ENCODE measurements at regions of chr2 and their contacts with region 1.

Region 1: GRCh38 chr2:121771976-121772742 is 16.7 kb downstream of the TSN start:
- DNase-seq: peak; percentile 81
- H3K4me3 ChIP-seq: peak overlapping the region; percentile 43
- H3K27ac ChIP-seq: peak overlapping the region; percentile 87
- H3K4me1 ChIP-seq: peaks cover 27% of the 10 kb centered on the region
- CTCF ChIP-seq: no peak

Region 2: DNA sequence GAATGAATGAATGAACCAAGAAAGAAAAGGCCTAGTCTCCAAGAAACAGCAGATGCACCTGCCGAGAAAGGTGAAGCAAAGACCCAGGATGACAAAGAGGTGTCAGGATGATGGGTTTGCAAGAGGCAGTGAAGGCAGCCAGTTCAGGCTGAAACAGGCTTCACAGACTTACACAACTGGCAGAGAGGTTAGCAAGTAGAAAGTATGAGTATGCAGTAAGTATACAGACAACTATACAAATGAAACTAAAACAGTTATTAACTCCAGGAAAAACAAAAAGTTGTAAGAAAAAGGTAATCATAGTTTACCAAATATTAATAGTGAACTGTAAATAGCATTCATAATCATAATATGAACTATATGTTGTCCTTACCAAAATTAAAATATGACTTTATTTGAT is 261.3 kb before region 1 on chr2:
- CTCF ChIA-PET with region 1: no interaction called
- POLR2A ChIA-PET with region 1: no interaction called
- intact Hi-C with region 1: no loop called
- DNase-seq: no peak
- H3K4me3 ChIP-seq: no peak overlapping the region
- H3K27ac ChIP-seq: no peak overlapping the region
- H3K4me1 ChIP-seq: no peaks in the 10 kb centered on the region
- CTCF ChIP-seq: no peak

Region 3: DNA sequence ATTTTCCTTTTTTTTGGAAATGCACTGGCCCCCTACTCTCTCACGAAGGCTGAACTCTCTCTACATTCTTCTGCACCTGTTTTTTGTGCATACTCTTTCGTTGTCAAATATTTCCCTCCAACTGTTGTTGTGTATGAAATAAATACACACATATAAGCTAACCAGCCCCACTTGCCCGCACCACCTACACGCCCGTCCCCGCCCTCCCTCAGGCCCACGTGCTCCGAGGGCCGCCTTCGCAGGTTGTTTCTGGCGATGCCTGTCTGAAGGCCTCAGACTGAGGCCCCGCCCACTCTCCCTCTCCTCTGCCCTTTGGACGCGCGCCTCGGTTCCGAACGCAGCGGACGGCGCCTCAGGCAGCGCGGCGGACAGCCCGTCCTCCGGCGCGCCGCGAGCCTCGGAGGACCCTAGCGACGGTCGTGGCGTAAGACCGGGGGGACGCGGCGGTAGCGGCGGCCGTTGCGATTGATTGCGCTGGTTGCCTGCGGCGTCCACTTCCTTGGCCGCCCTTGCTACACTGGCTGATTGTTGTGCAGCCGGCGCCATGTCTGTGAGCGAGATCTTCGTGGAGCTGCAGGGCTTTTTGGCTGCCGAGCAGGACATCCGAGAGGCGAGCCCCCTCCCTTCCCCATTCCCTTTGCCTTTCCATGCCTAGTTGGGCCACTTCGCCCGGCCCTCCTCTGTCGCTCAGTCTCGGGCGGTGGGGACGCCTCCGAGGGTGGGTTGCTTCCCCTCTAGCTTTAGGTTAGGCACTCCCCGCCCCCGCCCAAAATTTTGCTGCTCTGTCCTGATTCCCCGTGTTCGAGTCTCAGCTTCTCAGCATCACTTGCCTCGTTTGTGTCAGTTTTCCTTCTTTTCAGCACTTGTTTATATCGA is 16.7 kb before region 1 on chr2 and contains the start of gene TSN:
- CTCF ChIA-PET with region 1: no interaction called
- POLR2A ChIA-PET with region 1: interaction called, 10 read pairs
- intact Hi-C with region 1: no loop called
- DNase-seq: peak; percentile 99
- H3K4me3 ChIP-seq: peak within 1 kb of the TSS; percentile 99
- H3K27ac ChIP-seq: peak within 1 kb of the TSS; percentile 63
- H3K4me1 ChIP-seq: peaks cover 29% of the 10 kb centered on the region
- CTCF ChIP-seq: no peak
- total RNA-seq, gene TSN: 59.2 and 64.4 TPM in 2 replicates

Region 4: GRCh38 chr2:121816797-121817196 is 44.6 kb after region 1 on chr2:
- CTCF ChIA-PET with region 1: interaction called, 3 read pairs
- POLR2A ChIA-PET with region 1: interaction called, 4 read pairs
- intact Hi-C with region 1: loop called (anchors 5 kb)
- DNase-seq: peak; percentile 46
- H3K4me3 ChIP-seq: no peak overlapping the region
- H3K27ac ChIP-seq: no peak overlapping the region
- H3K4me1 ChIP-seq: peaks cover 66% of the 10 kb centered on the region
- CTCF ChIP-seq: no peak